Activated T-helper 1 cell treated with anti-CD3 and anti-CD28 coated beads, Interleukin-12 subunit alpha, Interleukin-12 subunit beta, Interleukin-2, Interleukin-4 antibody, amounts not matched to agents 30 ng/mL and 10 ng/mL and 1 ng/mL, durations not matched to agents 14 hours and 24 hours and 36 hours (primary cell): ENCODE measurements at regions of chr13 and their contacts with region 1.

Region 1: GRCh38 chr13:108218044-108218974 is at the start of gene ABHD13:
- DNase-seq: peak; percentile 89
- H3K4me3 Mint-ChIP-seq: peak within 1 kb of the TSS; percentile 95
- H3K27ac Mint-ChIP-seq: peak within 1 kb of the TSS; percentile 94
- H3K4me1 Mint-ChIP-seq: peaks cover 44% of the 10 kb centered on the region
- H3K27me3 Mint-ChIP-seq: peaks cover 2% of the 10 kb centered on the region
- total RNA-seq, gene ABHD13: 8.0 and 8.5 TPM in 2 replicates

Region 2: GRCh38 chr13:108176685-108177274 is 41.5 kb before region 1 on chr13:
- intact Hi-C with region 1: loop called (anchors 2 kb)
- DNase-seq: peak; percentile 2
- H3K4me3 Mint-ChIP-seq: no peak overlapping the region
- H3K27ac Mint-ChIP-seq: no peak overlapping the region
- H3K4me1 Mint-ChIP-seq: no peaks in the 10 kb centered on the region
- H3K27me3 Mint-ChIP-seq: peaks cover 4% of the 10 kb centered on the region

Region 3: GRCh38 chr13:108200781-108201398 is 17.4 kb before region 1 on chr13:
- intact Hi-C with region 1: loop called (anchors 1 kb)
- DNase-seq: no peak
- H3K4me3 Mint-ChIP-seq: no peak overlapping the region
- H3K27ac Mint-ChIP-seq: no peak overlapping the region
- H3K4me1 Mint-ChIP-seq: peaks cover 29% of the 10 kb centered on the region
- H3K27me3 Mint-ChIP-seq: peaks cover 9% of the 10 kb centered on the region

Region 4: DNA sequence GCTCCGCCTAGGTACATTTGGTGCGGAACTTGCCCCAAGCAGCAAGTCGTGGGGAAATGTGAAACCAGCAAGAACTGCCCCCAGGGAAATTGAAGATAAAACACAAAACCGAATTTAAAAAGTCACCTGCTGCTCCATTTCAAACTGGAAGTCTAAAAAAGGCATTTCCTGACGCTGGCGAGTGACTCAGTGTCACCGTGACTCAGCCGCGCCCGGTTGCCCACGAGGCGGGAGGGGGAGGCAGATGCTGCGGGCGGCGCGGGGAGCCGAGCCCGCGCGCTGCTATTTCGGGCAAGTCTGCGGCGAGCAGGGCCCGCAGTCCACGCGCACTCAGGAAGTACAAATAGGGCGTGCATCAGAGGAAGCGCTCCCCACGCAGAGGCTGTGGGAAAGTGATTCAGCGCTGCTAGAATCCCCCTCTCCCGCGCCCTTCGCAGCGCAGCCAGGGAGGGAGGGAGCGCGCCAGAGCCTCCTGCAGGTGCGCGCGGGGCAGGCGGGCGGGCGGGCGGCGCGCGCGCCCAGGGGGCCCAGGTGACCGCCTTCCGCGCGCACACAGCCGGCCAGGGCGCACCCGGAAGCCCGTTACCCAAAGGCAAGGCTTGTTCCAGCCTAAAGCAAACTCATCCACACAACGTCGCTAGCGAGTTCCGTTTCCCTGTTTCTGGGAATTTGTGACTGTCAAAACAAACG is 1919.8 kb after region 1 on chr13:
- intact Hi-C with region 1: loop called (anchors 5 kb)
- DNase-seq: peak; percentile 59
- H3K4me3 Mint-ChIP-seq: peak overlapping the region; percentile 73
- H3K27ac Mint-ChIP-seq: peak overlapping the region; percentile 73
- H3K4me1 Mint-ChIP-seq: peaks cover 10% of the 10 kb centered on the region
- H3K27me3 Mint-ChIP-seq: peaks cover 41% of the 10 kb centered on the region